ENCODE measurements at regions of chr11 and their contacts with region 1.

Region 1: GRCh38 chr11:77154381-77155081 is 26.5 kb downstream of the MYO7A start:
- DNase-seq: no peak
- H3K4me3 ChIP-seq: no peak overlapping the region
- H3K27ac ChIP-seq: no peak overlapping the region
- H3K4me1 ChIP-seq: no peaks in the 10 kb centered on the region
- H3K27me3 ChIP-seq: no peaks in the 10 kb centered on the region
- CTCF ChIP-seq: no peak
- POLR2A ChIP-seq: no peak

Region 2: GRCh38 chr11:77106321-77106720 is 48.2 kb before region 1 on chr11:
- intact Hi-C with region 1: loop called (anchors 1 kb)
- DNase-seq: no peak
- H3K4me3 ChIP-seq: no peak overlapping the region
- H3K27ac ChIP-seq: no peak overlapping the region
- H3K4me1 ChIP-seq: no peaks in the 10 kb centered on the region
- H3K27me3 ChIP-seq: no peaks in the 10 kb centered on the region
- CTCF ChIP-seq: no peak
- POLR2A ChIP-seq: no peak

Region 3: GRCh38 chr11:77117492-77117891 is 37.0 kb before region 1 on chr11:
- intact Hi-C with region 1: no loop called
- DNase-seq: no peak
- H3K4me3 ChIP-seq: no peak overlapping the region
- H3K27ac ChIP-seq: no peak overlapping the region
- H3K4me1 ChIP-seq: no peaks in the 10 kb centered on the region
- H3K27me3 ChIP-seq: no peaks in the 10 kb centered on the region
- CTCF ChIP-seq: no peak
- POLR2A ChIP-seq: no peak

Measured in breast epithelium (tissue), 4 donors.